H1 (cell line): ENCODE measurements at regions of chr3 and their contacts with region 1.

Region 1: GRCh38 chr3:168620826-168621225 is 525.1 kb upstream of the GOLIM4 start:
- DNase-seq: peak; percentile 21 to 73
- H3K4me3 ChIP-seq: no peak overlapping the region
- H3K27ac ChIP-seq: no peak overlapping the region
- H3K4me1 ChIP-seq: peaks cover 0 to 27% (median 16%) of the 10 kb centered on the region in 4 experiments; a peak in 6 of 7 replicates
- H3K27me3 ChIP-seq: no peaks in the 10 kb centered on the region
- CTCF ChIP-seq: peak; percentile 53 to 97 (median 80)
- EP300 ChIP-seq: no peak
- POLR2A ChIP-seq: no peak
- RAD21 ChIP-seq: peak; percentile 95 to 97

Region 2: DNA sequence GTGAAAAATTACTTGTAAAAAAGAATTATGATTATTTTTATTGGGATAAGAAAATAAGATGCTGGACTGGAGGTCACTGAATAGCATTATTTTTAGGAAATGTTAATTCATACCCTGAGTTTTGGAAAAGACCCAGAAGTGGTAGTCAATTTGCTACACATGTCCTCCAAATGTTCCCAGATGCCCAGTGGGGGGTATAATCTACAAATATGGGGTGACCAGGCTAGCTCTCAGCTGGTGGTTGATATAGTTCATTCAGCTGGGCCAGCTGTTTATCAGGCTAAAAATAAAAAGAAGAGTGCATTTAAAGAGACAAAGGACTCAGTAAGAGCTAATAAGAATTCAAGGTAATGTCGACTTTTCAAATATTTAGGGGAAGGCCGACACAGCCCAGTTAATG is 123.1 kb before region 1 on chr3:
- CTCF ChIA-PET with region 1: interaction called, 11 read pairs
- POLR2A ChIA-PET with region 1: no interaction called
- DNase-seq: no peak
- H3K4me3 ChIP-seq: no peak overlapping the region
- H3K27ac ChIP-seq: no peak overlapping the region
- H3K4me1 ChIP-seq: no peaks in the 10 kb centered on the region
- H3K27me3 ChIP-seq: no peaks in the 10 kb centered on the region
- CTCF ChIP-seq: no peak
- EP300 ChIP-seq: no peak
- POLR2A ChIP-seq: no peak
- RAD21 ChIP-seq: no peak

Region 3: DNA sequence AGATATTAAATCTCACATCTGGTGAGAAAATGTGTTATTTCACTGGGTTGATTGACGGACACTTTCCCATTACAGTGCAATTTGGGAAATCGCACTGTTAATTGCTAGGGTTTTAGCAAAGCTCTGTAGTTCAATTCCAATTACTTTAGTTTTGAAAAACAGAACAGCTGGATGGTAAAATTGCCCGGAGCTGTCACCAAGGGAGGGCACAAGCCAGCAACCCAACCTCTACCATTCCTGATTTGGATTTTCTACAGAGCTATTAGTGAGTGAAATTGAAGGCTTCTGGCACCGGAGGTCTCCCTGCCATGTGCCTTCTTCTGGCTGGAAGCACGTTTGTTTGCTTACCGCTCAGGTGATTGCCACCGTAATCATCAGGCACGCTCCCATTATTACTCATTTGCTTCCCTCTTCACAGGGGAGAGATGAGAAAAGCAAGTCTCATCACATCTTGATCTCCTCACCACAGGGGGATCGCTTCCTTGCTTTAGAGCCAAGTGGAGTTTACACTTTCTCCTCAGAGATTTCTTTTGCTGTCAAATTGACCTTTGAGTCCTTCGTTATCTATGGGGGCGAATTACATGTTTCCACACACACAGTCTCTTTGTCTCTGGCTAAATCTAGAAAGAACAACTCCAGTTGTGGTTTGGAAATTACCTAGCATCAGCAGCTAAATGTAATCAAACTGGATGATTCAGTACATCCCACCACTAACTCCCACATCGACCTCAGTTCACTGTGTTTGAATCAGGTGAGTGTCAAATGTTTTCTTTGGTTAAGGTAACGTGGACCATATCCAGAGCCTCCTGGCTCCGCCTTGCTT is 103.4 kb before region 1 on chr3:
- CTCF ChIA-PET with region 1: interaction called, 20 read pairs
- POLR2A ChIA-PET with region 1: no interaction called
- DNase-seq: no peak
- H3K4me3 ChIP-seq: no peak overlapping the region
- H3K27ac ChIP-seq: no peak overlapping the region
- H3K4me1 ChIP-seq: peaks cover 2 to 15% (median 5%) of the 10 kb centered on the region in 4 experiments; a peak in 4 of 7 replicates
- H3K27me3 ChIP-seq: no peaks in the 10 kb centered on the region
- CTCF ChIP-seq: no peak
- EP300 ChIP-seq: no peak
- POLR2A ChIP-seq: no peak
- RAD21 ChIP-seq: no peak

Region 4: GRCh38 chr3:168591587-168591986 is 29.2 kb before region 1 on chr3:
- CTCF ChIA-PET with region 1: interaction called, 19 read pairs
- POLR2A ChIA-PET with region 1: no interaction called
- DNase-seq: no peak
- H3K4me3 ChIP-seq: no peak overlapping the region
- H3K27ac ChIP-seq: no peak overlapping the region
- H3K4me1 ChIP-seq: no peaks in the 10 kb centered on the region; a peak in 1 of 7 replicates
- H3K27me3 ChIP-seq: no peaks in the 10 kb centered on the region
- CTCF ChIP-seq: no peak
- EP300 ChIP-seq: no peak
- POLR2A ChIP-seq: no peak
- RAD21 ChIP-seq: no peak

Region 5: DNA sequence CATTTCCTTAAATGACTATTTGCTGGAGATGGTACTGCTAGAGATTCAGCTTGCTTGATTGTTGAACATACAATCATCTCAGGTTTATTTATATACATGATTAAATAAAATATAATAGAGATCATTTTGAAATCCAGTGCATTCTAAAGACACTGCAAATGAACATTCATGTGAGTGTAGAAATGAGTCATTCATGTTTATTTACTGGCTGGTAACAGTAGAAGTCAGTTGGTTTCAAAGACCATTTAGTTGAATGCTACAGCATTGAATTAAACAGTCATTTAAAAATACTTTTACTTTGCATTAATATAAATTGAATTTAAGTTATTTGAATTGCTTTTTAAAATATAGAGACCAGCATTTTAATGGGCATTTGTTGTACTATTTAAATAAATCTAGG is 26.8 kb after region 1 on chr3:
- CTCF ChIA-PET with region 1: no interaction called
- POLR2A ChIA-PET with region 1: no interaction called
- DNase-seq: no peak
- H3K4me3 ChIP-seq: no peak overlapping the region
- H3K27ac ChIP-seq: no peak overlapping the region
- H3K4me1 ChIP-seq: no peaks in the 10 kb centered on the region; a peak in 2 of 7 replicates
- H3K27me3 ChIP-seq: no peaks in the 10 kb centered on the region
- CTCF ChIP-seq: no peak
- EP300 ChIP-seq: no peak
- POLR2A ChIP-seq: no peak
- RAD21 ChIP-seq: no peak

Region 6: GRCh38 chr3:168678730-168679129 is 57.9 kb after region 1 on chr3:
- CTCF ChIA-PET with region 1: no interaction called
- POLR2A ChIA-PET with region 1: no interaction called
- DNase-seq: no peak
- H3K4me3 ChIP-seq: no peak overlapping the region
- H3K27ac ChIP-seq: no peak overlapping the region
- H3K4me1 ChIP-seq: no peaks in the 10 kb centered on the region
- H3K27me3 ChIP-seq: no peaks in the 10 kb centered on the region
- CTCF ChIP-seq: no peak
- EP300 ChIP-seq: no peak
- POLR2A ChIP-seq: no peak
- RAD21 ChIP-seq: no peak

Region 7: DNA sequence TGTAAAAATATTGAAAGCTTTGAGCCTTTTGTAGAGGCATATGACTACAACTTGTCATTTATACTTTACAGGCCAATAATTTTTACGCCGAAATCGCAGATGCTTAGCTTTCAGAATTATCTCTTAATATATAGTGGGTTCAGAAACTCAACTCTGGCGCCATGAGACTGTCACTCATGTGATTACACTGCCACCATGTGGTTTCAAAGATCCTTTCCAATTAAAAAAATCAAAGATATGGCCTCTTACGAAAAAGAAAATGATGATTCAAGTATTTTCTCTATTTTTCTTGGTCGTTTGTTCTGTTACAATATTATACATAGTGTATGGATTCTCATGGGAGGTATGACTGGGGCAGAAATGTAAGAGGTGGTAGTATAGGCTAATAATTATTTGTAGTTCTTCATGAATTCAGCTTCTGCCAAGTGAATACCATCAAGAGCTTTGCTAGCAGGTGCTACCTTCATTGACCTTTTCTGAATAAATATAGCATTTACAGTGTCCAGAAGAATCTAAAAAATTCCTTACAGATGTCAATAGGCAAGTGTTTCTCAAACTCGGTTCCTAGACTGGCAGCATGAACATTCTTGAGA is 226.6 kb after region 1 on chr3:
- CTCF ChIA-PET with region 1: interaction called, 48 read pairs
- POLR2A ChIA-PET with region 1: no interaction called
- DNase-seq: no peak
- H3K4me3 ChIP-seq: no peak overlapping the region
- H3K27ac ChIP-seq: no peak overlapping the region
- H3K4me1 ChIP-seq: peaks cover 0 to 2% (median 0%) of the 10 kb centered on the region in 4 experiments; a peak in 3 of 7 replicates
- H3K27me3 ChIP-seq: no peaks in the 10 kb centered on the region
- CTCF ChIP-seq: peak in 2 of 3 experiments; percentile 57 to 59; a peak in 3 of 4 replicates
- EP300 ChIP-seq: no peak
- POLR2A ChIP-seq: no peak
- RAD21 ChIP-seq: peak; percentile 92 to 95

Region 8: GRCh38 chr3:168878655-168879054 is 257.8 kb after region 1 on chr3:
- CTCF ChIA-PET with region 1: no interaction called
- POLR2A ChIA-PET with region 1: no interaction called
- DNase-seq: no peak
- H3K4me3 ChIP-seq: no peak overlapping the region
- H3K27ac ChIP-seq: no peak overlapping the region
- H3K4me1 ChIP-seq: peaks cover 0 to 7% (median 3%) of the 10 kb centered on the region in 4 experiments; a peak in 5 of 7 replicates
- H3K27me3 ChIP-seq: no peaks in the 10 kb centered on the region
- CTCF ChIP-seq: no peak
- EP300 ChIP-seq: no peak
- POLR2A ChIP-seq: no peak
- RAD21 ChIP-seq: no peak

Region 9: GRCh38 chr3:168914662-168915061 is 293.8 kb after region 1 on chr3:
- CTCF ChIA-PET with region 1: no interaction called
- POLR2A ChIA-PET with region 1: no interaction called
- DNase-seq: no peak
- H3K4me3 ChIP-seq: no peak overlapping the region
- H3K27ac ChIP-seq: no peak overlapping the region
- H3K4me1 ChIP-seq: no peaks in the 10 kb centered on the region
- H3K27me3 ChIP-seq: no peaks in the 10 kb centered on the region
- CTCF ChIP-seq: no peak
- EP300 ChIP-seq: no peak
- POLR2A ChIP-seq: no peak
- RAD21 ChIP-seq: no peak